Thyroid gland (tissue), 4 donors: ENCODE measurements at regions of chr1 and their contacts with region 1.

Region 1: GRCh38 chr1:29394521-29395225 is 158.4 kb downstream of the PTPRU start:
- DNase-seq: no peak
- H3K4me3 ChIP-seq: no peak overlapping the region
- H3K27ac ChIP-seq: no peak overlapping the region
- H3K4me1 ChIP-seq: no peaks in the 10 kb centered on the region
- H3K27me3 ChIP-seq: no peaks in the 10 kb centered on the region
- CTCF ChIP-seq: no peak
- POLR2A ChIP-seq: no peak

Region 2: GRCh38 chr1:30407865-30408580 is 1013.4 kb after region 1 on chr1:
- intact Hi-C with region 1: loop called (anchors 5 kb)
- DNase-seq: no peak
- H3K4me3 ChIP-seq: no peak overlapping the region
- H3K27ac ChIP-seq: no peak overlapping the region
- H3K4me1 ChIP-seq: no peaks in the 10 kb centered on the region
- H3K27me3 ChIP-seq: no peaks in the 10 kb centered on the region
- CTCF ChIP-seq: no peak
- POLR2A ChIP-seq: no peak